Calu3 (cell line): ENCODE measurements at regions of chrX and their contacts with region 1.

Region 1: GRCh38 chrX:33336783-33337182 is 125.4 kb upstream of the DMD start:
- DNase-seq: peak; percentile 41
- H3K4me3 Mint-ChIP-seq: no peak overlapping the region
- H3K27ac Mint-ChIP-seq: no peak overlapping the region
- H3K4me1 Mint-ChIP-seq: peaks cover 6% of the 10 kb centered on the region
- H3K27me3 Mint-ChIP-seq: no peaks in the 10 kb centered on the region
- CTCF ChIP-seq: no peak

Region 2: GRCh38 chrX:32530802-32531403 is 805.9 kb before region 1 on chrX:
- CTCF ChIA-PET with region 1: no interaction called
- intact Hi-C with region 1: loop called (anchors 1 kb)
- DNase-seq: peak; percentile 13
- H3K4me3 Mint-ChIP-seq: no peak overlapping the region
- H3K27ac Mint-ChIP-seq: no peak overlapping the region
- H3K4me1 Mint-ChIP-seq: no peaks in the 10 kb centered on the region
- H3K27me3 Mint-ChIP-seq: no peaks in the 10 kb centered on the region
- CTCF ChIP-seq: peak; percentile 43

Region 3: DNA sequence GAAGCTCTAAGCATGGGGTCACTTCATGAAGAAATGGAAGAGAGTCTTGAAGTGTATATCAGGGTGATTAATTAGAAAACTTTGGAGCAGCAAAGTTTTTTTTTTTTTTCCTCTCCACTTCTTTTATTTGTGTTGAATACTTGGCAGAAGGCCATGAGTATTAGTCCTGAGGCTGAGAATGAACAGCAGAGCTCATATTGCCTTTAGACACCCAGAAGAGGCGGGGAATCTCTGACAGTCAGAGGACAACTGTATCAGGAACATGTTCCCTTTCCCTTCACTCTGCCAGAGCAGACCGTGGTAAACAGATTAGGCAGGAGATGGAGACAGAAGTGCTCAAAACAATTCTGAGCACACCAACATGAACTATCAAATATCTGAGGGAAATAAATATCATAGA is 494.4 kb after region 1 on chrX:
- CTCF ChIA-PET with region 1: no interaction called
- intact Hi-C with region 1: no loop called
- DNase-seq: no peak
- H3K4me3 Mint-ChIP-seq: no peak overlapping the region
- H3K27ac Mint-ChIP-seq: no peak overlapping the region
- H3K4me1 Mint-ChIP-seq: peaks cover 9% of the 10 kb centered on the region
- H3K27me3 Mint-ChIP-seq: no peaks in the 10 kb centered on the region
- CTCF ChIP-seq: no peak

Region 4: DNA sequence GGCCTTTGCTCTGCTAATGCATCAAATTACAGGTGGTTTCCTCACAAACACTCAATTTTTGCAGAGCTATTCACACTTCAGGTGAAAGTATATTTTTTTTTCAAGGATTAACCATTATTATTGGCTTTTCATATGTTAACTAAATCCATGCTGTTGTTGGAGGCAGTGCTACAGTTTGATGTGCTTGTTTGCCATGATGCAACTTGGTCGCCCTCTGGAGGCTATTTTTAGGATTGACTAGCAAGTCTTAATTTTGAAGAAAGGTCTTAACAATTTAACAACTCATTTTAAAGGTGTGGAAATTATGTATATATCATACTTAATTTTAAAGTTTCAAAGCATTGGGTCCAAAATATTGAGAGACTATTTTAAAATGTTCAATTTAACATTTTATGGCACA is 964.1 kb after region 1 on chrX:
- CTCF ChIA-PET with region 1: no interaction called
- intact Hi-C with region 1: loop called (anchors 5 kb)
- DNase-seq: peak; percentile 44
- H3K4me3 Mint-ChIP-seq: no peak overlapping the region
- H3K27ac Mint-ChIP-seq: no peak overlapping the region
- H3K4me1 Mint-ChIP-seq: no peaks in the 10 kb centered on the region
- H3K27me3 Mint-ChIP-seq: no peaks in the 10 kb centered on the region
- CTCF ChIP-seq: peak; percentile 32